Mammary epithelial cell (primary cell): ENCODE measurements at regions of chr19 and their contacts with region 1.

Region 1: DNA sequence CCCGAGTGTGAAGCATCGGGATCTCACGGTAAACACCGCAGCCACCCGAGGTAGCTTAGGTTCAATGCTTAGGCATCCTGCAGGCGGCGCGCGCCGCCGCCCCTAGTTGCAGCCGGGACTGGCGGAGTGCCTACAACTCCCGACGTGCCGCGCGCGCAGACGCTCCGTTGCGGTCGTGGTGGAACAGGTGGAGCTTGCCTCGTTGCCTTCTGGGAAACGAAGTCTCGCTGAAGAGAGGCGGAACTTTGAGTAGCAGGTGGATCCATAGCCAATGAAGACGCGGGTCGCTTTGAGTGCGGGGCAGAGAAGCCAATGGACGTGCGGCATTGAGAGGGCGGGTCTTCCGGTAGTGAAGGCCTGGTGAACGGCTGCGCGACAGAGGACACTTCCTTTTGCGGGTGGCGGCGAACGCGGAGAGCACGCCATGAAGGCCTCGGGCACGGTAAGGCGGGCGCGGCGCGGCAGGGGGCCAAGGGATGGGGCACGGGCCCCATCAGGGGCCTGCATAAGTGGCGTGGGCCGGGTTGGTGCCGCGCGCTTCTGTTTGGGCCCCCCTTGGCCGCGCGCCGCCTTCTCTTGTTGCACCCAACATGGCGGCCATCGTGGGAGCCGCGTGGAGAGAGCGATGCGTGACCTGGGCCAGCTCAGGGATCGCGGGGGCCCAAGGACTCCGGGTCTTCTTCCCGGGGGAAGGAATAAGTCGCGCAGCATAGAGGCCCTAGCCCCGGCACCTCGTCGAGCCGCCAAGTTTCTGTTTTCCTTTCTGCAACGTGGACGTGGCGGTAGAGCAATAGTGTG is at the start of gene RPL18A:
- DNase-seq: peak; percentile 100
- H3K4me3 ChIP-seq: peak within 1 kb of the TSS; percentile 95 to 98 (median 97)
- H3K27ac ChIP-seq: peak within 1 kb of the TSS; percentile 84
- H3K4me1 ChIP-seq: peaks cover 8% of the 10 kb centered on the region
- H3K27me3 ChIP-seq: no peaks in the 10 kb centered on the region
- CTCF ChIP-seq: peak; percentile 58 to 95
- total RNA-seq, gene RPL18A: 1,272 to 2,030 TPM

Region 2: DNA sequence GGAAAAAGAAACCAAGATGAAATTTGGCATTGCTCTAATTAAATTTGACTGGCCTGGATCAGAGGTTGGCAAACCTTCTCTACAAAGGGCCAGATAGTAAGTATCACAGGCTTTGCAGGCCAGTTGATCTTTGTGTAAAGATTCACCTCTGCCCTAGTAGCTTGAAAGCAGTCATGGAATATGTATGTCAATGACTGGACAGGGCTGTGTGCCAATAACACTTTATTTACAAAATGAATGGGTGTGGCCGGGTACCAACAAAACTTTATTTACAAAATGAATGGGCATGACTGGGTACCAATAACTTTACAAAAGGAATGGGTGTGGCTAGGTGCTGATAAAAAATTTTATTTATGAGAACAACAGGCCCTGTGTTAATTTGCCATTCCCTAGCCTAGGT is 1010.6 kb before region 1 on chr19:
- CTCF ChIA-PET with region 1: no interaction called
- dilution Hi-C with region 1: no loop called
- in situ Hi-C with region 1: no loop called
- intact Hi-C with region 1: no loop called
- DNase-seq: no peak
- H3K4me3 ChIP-seq: no peak overlapping the region
- H3K27ac ChIP-seq: no peak overlapping the region
- H3K4me1 ChIP-seq: no peaks in the 10 kb centered on the region
- H3K27me3 ChIP-seq: no peaks in the 10 kb centered on the region
- CTCF ChIP-seq: no peak

Region 3: DNA sequence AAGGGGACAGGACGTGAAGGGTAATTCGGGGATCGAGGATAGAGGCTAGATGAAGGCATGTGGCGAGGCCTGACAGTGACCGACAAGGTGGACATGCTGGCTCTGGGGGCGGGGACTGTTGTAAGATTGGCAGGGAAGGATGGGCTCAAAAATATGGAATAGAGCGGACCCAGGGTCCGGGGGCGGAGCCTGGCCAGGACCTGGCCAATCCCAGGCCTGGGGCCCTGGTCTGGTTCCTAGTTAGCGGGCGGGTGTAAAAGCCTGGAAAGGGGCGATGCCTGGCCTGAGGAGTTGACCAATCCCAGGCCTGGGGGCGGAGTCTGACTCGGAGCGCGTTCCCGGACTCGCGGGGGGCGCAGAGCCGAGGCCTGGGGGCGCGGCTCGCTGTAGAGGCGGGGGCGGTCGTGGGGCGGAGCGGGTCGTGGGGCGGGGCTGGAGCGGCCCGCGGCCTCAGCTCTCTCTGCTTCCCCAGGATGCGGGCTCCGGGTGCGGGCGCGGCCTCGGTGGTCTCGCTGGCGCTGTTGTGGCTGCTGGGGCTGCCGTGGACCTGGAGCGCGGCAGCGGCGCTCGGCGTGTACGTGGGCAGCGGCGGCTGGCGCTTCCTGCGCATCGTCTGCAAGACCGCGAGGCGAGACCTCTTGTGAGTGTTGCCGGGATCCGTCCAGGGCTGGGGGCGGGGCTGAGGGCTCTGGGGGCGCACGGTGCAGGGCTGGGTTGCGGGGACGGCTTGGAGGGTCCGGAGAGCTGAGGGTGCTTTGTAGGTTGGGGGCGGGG is 389.5 kb before region 1 on chr19 and contains the start of gene SLC27A1:
- CTCF ChIA-PET with region 1: no interaction called
- dilution Hi-C with region 1: no loop called
- in situ Hi-C with region 1: no loop called
- intact Hi-C with region 1: loop called (anchors 5 kb)
- DNase-seq: peak; percentile 99
- H3K4me3 ChIP-seq: peak within 1 kb of the TSS; percentile 75 to 85 (median 84)
- H3K27ac ChIP-seq: peak within 1 kb of the TSS; percentile 83
- H3K4me1 ChIP-seq: peaks cover 16% of the 10 kb centered on the region
- H3K27me3 ChIP-seq: no peaks in the 10 kb centered on the region
- CTCF ChIP-seq: no peak
- total RNA-seq, gene SLC27A1: 42.2 to 90.4 TPM

Region 4: DNA sequence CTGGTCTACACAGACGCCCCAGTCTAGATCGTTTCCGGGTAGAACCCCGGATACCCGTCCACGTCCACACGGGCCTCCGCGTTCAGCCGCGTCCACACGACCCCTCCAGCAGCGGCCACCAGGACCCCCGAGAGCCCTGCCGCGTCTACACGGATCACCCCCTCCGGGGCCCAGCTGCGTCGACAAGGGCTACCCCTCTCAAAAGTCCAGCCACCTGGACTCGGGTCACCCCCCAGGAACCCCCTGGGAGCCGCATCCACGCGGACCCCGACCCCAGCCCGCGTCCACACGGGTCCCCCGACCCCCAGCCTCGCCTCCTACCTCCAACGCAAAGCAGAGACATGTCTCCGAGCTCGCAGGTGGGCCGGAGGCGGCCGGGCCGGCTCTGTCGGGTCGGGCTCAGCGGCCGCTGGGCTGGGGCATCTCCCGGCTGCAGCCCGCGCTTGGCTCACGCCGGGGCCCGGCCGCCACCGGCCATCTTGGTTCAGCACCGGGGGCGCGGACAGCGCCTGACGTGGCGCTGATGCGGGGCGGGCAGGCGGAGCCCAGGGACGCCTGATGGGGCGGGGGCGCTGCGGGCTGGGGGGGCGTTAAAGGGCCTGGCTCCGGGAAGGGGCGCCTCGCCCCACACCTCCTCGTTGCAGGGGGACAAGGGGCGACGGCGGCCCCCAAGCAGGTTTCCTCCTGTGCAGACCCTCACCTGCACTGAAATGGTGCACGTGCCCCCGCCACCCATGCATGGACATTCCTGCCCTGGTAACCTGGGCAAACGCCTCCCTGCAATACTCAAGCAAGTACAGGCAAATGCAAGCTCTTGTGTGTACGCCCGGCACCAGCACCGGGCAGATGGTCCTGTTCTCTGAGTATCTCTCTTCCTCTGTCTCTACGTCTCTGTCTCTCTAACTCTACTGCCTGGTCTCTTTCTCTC is 171.6 kb before region 1 on chr19 and contains the start of gene UNC13A:
- CTCF ChIA-PET with region 1: interaction called, 8 read pairs
- dilution Hi-C with region 1: no loop called
- in situ Hi-C with region 1: no loop called
- intact Hi-C with region 1: loop called (anchors 5 kb)
- DNase-seq: peak; percentile 39
- H3K4me3 ChIP-seq: peak within 1 kb of the TSS in 1 of 3 experiments; percentile 17
- H3K27ac ChIP-seq: no peak within 1 kb of the TSS
- H3K4me1 ChIP-seq: peaks cover 10% of the 10 kb centered on the region
- H3K27me3 ChIP-seq: peaks cover 15% of the 10 kb centered on the region
- CTCF ChIP-seq: no peak
- total RNA-seq, gene UNC13A: 0.73 TPM in 1 of 2 donors, not detected in the other

Region 5: GRCh38 chr19:17784201-17785008 is 75.3 kb before region 1 on chr19:
- CTCF ChIA-PET with region 1: no interaction called
- dilution Hi-C with region 1: no loop called
- in situ Hi-C with region 1: no loop called
- intact Hi-C with region 1: loop called (anchors 2 kb)
- DNase-seq: peak; percentile 35
- H3K4me3 ChIP-seq: no peak overlapping the region
- H3K27ac ChIP-seq: no peak overlapping the region
- H3K4me1 ChIP-seq: no peaks in the 10 kb centered on the region
- H3K27me3 ChIP-seq: no peaks in the 10 kb centered on the region
- CTCF ChIP-seq: peak; percentile 74 to 76

Region 6: GRCh38 chr19:17847538-17848366 is 12.0 kb before region 1 on chr19 and contains the start of gene JAK3:
- CTCF ChIA-PET with region 1: interaction called, 21 read pairs
- dilution Hi-C with region 1: no loop called
- in situ Hi-C with region 1: no loop called
- intact Hi-C with region 1: no loop called
- DNase-seq: no peak
- H3K4me3 ChIP-seq: no peak within 1 kb of the TSS
- H3K27ac ChIP-seq: no peak within 1 kb of the TSS
- H3K4me1 ChIP-seq: peaks cover 12% of the 10 kb centered on the region
- H3K27me3 ChIP-seq: no peaks in the 10 kb centered on the region
- CTCF ChIP-seq: no peak
- total RNA-seq, gene JAK3: 0.31 to 8.2 TPM

Region 7: GRCh38 chr19:18007044-18007916 is 147.5 kb after region 1 on chr19:
- CTCF ChIA-PET with region 1: no interaction called
- dilution Hi-C with region 1: no loop called
- in situ Hi-C with region 1: loop called in 1 of 2 experiments (anchors 10 kb)
- intact Hi-C with region 1: no loop called
- DNase-seq: peak; percentile 69
- H3K4me3 ChIP-seq: peak overlapping the region; percentile 23 to 43 (median 39)
- H3K27ac ChIP-seq: peak overlapping the region; percentile 9
- H3K4me1 ChIP-seq: peaks cover 12% of the 10 kb centered on the region
- H3K27me3 ChIP-seq: no peaks in the 10 kb centered on the region
- CTCF ChIP-seq: peak; percentile 95 to 98

Region 8: GRCh38 chr19:18074190-18074589 is 214.5 kb after region 1 on chr19:
- CTCF ChIA-PET with region 1: no interaction called
- dilution Hi-C with region 1: no loop called
- in situ Hi-C with region 1: no loop called
- intact Hi-C with region 1: no loop called
- DNase-seq: no peak
- H3K4me3 ChIP-seq: no peak overlapping the region
- H3K27ac ChIP-seq: no peak overlapping the region
- H3K4me1 ChIP-seq: no peaks in the 10 kb centered on the region
- H3K27me3 ChIP-seq: no peaks in the 10 kb centered on the region
- CTCF ChIP-seq: peak in 1 of 2 donors; percentile 11

Region 9: GRCh38 chr19:18304458-18305310 is 445.0 kb after region 1 on chr19:
- CTCF ChIA-PET with region 1: no interaction called
- dilution Hi-C with region 1: no loop called
- in situ Hi-C with region 1: no loop called
- intact Hi-C with region 1: no loop called
- DNase-seq: peak; percentile 48
- H3K4me3 ChIP-seq: peak overlapping the region; percentile 8 to 21 (median 11)
- H3K27ac ChIP-seq: peak overlapping the region; percentile 66
- H3K4me1 ChIP-seq: peaks cover 28% of the 10 kb centered on the region
- H3K27me3 ChIP-seq: no peaks in the 10 kb centered on the region
- CTCF ChIP-seq: no peak

Region 10: GRCh38 chr19:18328340-18329034 is 468.8 kb after region 1 on chr19:
- CTCF ChIA-PET with region 1: no interaction called
- dilution Hi-C with region 1: no loop called
- in situ Hi-C with region 1: no loop called
- intact Hi-C with region 1: no loop called
- DNase-seq: peak; percentile 97
- H3K4me3 ChIP-seq: peak overlapping the region in 2 of 3 experiments; percentile 24 to 37
- H3K27ac ChIP-seq: no peak overlapping the region
- H3K4me1 ChIP-seq: peaks cover 13% of the 10 kb centered on the region
- H3K27me3 ChIP-seq: no peaks in the 10 kb centered on the region
- CTCF ChIP-seq: peak; percentile 88 to 94